G401 (cell line): ENCODE measurements at regions of chr19 and their contacts with region 1.

Region 1: GRCh38 chr19:49264258-49264657 is 60.7 kb downstream of the SLC6A16 start:
- DNase-seq: no peak

Region 2: DNA sequence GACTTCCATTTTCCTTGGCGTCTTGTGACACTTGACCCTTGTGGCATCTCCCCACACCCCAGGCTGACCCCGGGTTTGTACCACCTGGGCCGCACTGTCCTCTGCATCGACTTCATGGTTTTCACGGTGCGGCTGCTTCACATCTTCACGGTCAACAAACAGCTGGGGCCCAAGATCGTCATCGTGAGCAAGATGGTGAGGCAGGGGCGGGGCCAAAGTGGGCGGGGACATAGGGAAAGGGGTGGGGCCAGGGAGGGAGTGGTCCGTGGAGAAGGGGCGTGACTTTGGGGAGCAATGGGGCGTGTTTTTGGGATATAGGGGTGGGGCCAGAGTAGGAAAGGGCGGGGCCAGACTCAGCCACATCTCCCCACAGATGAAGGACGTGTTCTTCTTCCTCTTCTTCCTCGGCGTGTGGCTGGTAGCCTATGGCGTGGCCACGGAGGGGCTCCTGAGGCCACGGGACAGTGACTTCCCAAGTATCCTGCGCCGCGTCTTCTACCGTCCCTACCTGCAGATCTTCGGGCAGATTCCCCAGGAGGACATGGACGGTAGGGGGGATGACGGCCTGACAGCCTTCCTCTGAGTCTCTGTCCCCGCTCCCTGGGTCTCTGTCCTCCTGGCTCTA is 63.9 kb before region 1 on chr19:
- in situ Hi-C with region 1: no loop called
- DNase-seq: no peak

Region 3: GRCh38 chr19:49327878-49328544 is 63.8 kb after region 1 on chr19:
- in situ Hi-C with region 1: loop called (anchors 10 kb)
- DNase-seq: no peak